Activated CD4-positive, alpha-beta T cell treated with anti-CD3 and anti-CD28 coated beads for 36 hours (primary cell): ENCODE measurements at regions of chr1 and their contacts with region 1.

Region 1: DNA sequence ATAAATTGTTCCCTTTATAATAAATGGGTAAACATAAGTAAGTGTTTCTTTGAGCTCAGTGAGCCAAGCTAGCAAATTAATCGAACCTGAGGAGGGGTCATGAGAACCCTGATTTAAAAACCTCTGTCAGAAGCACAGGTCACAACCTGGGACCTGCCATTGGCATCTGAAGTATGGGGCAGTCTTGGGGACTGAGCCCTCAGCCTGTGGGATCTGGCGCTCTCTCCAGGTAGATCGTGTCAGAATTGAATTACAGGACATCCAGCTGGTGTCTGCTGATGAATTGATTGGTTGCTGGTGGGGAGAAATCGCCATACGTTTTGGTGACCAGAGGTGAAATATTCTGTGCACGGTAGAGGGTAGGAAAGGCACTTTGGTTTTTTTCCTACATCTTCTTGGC is 17.5 kb downstream of the UCK2 start:
- DNase-seq: no peak
- ATAC-seq: no peak
- H3K4me3 Mint-ChIP-seq: no peak overlapping the region
- H3K27ac Mint-ChIP-seq: no peak overlapping the region
- H3K4me1 Mint-ChIP-seq: peaks cover 36% of the 10 kb centered on the region
- H3K27me3 Mint-ChIP-seq: no peaks in the 10 kb centered on the region

Region 2: GRCh38 chr1:165815725-165816124 is 29.2 kb before region 1 on chr1:
- CTCF ChIA-PET with region 1: no interaction called
- POLR2A ChIA-PET with region 1: interaction called, 10 read pairs
- intact Hi-C with region 1: no loop called
- DNase-seq: no peak
- ATAC-seq: no peak
- H3K4me3 Mint-ChIP-seq: no peak overlapping the region
- H3K27ac Mint-ChIP-seq: no peak overlapping the region
- H3K4me1 Mint-ChIP-seq: no peaks in the 10 kb centered on the region
- H3K27me3 Mint-ChIP-seq: peaks cover 5% of the 10 kb centered on the region

Region 3: DNA sequence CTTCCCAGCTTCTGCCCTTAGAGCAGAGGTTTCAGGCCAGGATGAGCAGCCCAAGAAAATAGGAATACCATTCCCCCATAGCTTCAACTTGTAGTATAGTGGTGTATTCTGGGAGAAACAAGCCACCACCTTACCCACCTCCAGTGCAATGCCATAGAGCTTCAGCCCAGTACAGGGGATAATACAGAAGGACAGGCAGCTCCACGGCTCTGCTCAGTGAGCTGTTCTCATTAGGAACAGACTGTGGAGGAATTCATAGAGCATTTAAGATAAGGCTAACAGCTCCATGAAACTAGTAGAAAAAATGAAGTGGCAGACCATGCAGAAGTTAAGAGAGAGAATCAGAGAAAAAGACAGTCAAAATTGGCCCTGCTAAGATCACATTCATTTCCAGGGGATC is 699.6 kb after region 1 on chr1:
- CTCF ChIA-PET with region 1: no interaction called
- POLR2A ChIA-PET with region 1: no interaction called
- intact Hi-C with region 1: no loop called
- DNase-seq: no peak
- ATAC-seq: no peak
- H3K4me3 Mint-ChIP-seq: no peak overlapping the region
- H3K27ac Mint-ChIP-seq: no peak overlapping the region
- H3K4me1 Mint-ChIP-seq: no peaks in the 10 kb centered on the region
- H3K27me3 Mint-ChIP-seq: peaks cover 5% of the 10 kb centered on the region